AG04450 (cell line): ENCODE measurements at regions of chr12 and their contacts with region 1.

Region 1: DNA sequence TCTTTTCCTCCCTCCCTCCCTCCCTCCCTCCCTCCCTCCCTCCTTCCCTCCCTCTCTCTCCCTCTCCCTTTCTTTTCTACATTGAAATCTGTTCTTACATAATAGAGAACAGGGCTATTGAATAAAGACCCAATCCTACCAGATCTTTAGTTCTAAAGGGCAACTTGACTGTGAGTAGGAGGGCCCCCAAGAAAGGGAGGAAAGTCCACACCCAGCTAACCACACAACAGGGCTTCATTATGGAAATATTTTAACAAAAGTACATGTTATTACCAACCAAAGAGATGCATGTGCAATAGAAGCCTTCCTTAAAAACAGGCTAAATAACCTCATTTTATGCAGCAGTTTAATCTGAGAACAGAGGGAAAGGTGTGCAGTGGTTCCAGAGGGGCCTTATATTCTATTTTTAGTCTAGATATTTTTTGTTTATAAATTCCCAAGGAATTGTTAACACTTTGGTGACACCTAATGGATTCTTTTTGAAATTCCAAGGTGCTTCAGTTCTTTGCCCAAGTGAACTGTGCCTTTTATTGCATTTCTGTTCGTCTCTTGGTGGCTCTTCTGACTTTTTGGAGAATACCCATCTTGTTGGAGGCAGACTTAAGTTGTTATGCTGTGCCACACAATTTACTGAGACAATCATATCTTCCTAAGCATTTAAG is 63.0 kb downstream of the GNS start:
- DNase-seq: no peak
- H3K4me3 ChIP-seq: no peak overlapping the region
- H3K27ac ChIP-seq: no peak overlapping the region
- H3K27me3 ChIP-seq: no peaks in the 10 kb centered on the region
- CTCF ChIP-seq: peak; percentile 34; the same call in 1 of the 2 replicates

Region 2: DNA sequence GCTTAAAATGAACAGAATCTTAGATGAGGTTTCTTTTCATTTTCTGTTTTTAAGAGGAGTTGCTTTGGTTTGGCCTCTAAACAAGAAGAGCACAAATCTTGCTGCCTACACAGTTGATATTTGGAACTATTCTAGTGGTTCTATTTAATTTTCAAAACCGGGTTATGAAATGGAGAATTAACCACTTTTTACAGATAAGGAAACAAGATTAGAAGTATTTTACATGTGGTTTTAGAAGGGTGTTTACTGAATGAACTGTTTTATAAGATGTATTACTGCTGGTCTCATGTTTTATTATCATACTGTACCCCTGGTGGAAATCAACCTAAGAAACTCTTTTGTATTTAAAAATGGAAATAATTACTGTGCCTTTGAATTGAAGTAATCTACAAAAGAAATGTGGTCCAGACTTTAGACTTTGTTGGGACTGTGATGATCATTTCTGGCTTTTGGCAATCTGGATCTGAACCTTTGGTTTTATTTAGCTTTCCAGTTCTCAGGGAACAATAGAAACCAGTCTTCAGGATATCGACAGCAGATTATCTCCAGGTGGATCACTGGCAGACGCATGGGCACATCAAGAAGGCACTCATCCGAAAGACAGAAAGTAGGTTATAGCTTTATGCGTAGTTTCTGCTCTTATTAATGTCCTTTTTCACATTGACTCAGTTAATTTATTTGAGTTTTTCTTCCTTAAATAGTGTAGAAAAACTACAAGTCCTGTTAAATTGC is 201.0 kb before region 1 on chr12:
- CTCF ChIA-PET with region 1: interaction called, 14 read pairs
- POLR2A ChIA-PET with region 1: no interaction called
- DNase-seq: no peak
- H3K4me3 ChIP-seq: no peak overlapping the region
- H3K27ac ChIP-seq: no peak overlapping the region
- H3K27me3 ChIP-seq: no peaks in the 10 kb centered on the region
- CTCF ChIP-seq: no peak

Region 3: GRCh38 chr12:64560396-64561304 is 135.6 kb before region 1 on chr12:
- CTCF ChIA-PET with region 1: interaction called, 17 read pairs
- POLR2A ChIA-PET with region 1: interaction called, 6 read pairs
- DNase-seq: peak; percentile 99
- H3K4me3 ChIP-seq: peak overlapping the region; percentile 27
- H3K27ac ChIP-seq: peak overlapping the region; percentile 89
- H3K27me3 ChIP-seq: no peaks in the 10 kb centered on the region
- CTCF ChIP-seq: no peak

Region 4: DNA sequence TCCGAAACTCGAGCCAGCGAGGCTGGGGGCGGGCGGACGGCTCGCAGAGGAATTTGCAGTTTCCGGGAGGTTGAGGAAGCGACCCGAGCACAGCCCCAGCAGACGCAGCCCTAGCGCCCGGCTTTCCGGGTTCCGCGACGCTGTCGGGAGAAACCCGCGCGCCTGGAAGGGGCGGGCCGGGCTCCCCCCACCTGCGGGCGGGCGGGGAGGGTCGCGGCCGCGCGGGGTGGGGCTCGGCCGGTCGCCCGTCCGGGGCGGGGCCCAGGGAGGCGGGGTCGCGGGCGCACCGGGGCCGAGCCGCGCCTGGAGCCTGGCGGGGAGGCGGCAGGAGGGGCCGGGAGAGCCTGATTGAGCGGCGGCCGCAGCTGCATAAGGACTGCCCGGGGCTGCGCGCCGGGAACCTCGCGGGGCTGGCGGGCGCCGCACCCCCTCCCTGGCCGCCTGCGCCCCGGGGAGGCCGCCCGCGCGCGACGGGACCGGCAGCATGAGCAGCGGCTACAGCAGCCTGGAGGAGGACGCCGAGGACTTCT is 86.0 kb before region 1 on chr12 and contains the start of gene RASSF3:
- CTCF ChIA-PET with region 1: interaction called, 14 read pairs
- POLR2A ChIA-PET with region 1: interaction called, 4 read pairs
- DNase-seq: no peak
- H3K4me3 ChIP-seq: peak within 1 kb of the TSS; percentile 90
- H3K27ac ChIP-seq: peak within 1 kb of the TSS; percentile 82
- H3K27me3 ChIP-seq: no peaks in the 10 kb centered on the region
- CTCF ChIP-seq: no peak
- polyA plus RNA-seq, gene RASSF3: 46.7 and 49.8 TPM in 2 replicates

Region 5: DNA sequence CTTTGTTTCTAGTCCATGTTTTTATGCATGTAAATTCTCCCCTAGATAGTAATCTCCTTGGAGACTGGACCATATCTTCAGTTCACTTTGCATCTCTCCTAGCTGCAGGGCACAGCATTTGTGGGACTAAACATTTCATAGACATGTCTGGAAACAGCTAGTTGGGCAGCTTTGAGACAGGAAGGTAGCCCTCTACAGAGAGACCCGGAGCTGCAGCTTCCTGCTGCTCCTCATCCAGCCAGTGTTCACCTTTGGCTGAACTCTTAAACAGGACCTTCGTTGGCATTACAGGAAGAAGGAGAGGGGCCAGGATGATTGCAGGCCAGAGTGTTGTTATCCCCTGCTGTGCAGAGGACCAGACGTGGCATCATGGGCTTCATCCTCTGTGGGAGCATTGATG is 10.1 kb after region 1 on chr12:
- CTCF ChIA-PET with region 1: interaction called, 13 read pairs
- POLR2A ChIA-PET with region 1: no interaction called
- DNase-seq: no peak
- H3K4me3 ChIP-seq: no peak overlapping the region
- H3K27ac ChIP-seq: no peak overlapping the region
- H3K27me3 ChIP-seq: no peaks in the 10 kb centered on the region
- CTCF ChIP-seq: no peak